ENCODE measurements at regions of chr9 and their contacts with region 1.

Region 1: GRCh38 chr9:12054235-12054634 is 639.0 kb upstream of the TYRP1 start:
- DNase-seq: no peak
- ATAC-seq: no peak
- H3K4me3 ChIP-seq: no peak overlapping the region
- H3K4me3 Mint-ChIP-seq: no peak overlapping the region
- H3K27ac ChIP-seq: no peak overlapping the region
- H3K27ac Mint-ChIP-seq: no peak overlapping the region
- H3K4me1 ChIP-seq: no peaks in the 10 kb centered on the region
- H3K4me1 Mint-ChIP-seq: no peaks in the 10 kb centered on the region
- H3K27me3 ChIP-seq: no peaks in the 10 kb centered on the region
- H3K27me3 Mint-ChIP-seq: no peaks in the 10 kb centered on the region

Region 2: GRCh38 chr9:12014488-12014887 is 39.7 kb before region 1 on chr9:
- CTCF ChIA-PET with region 1: no interaction called
- POLR2A ChIA-PET with region 1: no interaction called
- intact Hi-C with region 1: loop called in 1 of 2 experiments (anchors 5 kb)
- DNase-seq: no peak
- ATAC-seq: no peak
- H3K4me3 ChIP-seq: no peak overlapping the region
- H3K4me3 Mint-ChIP-seq: no peak overlapping the region
- H3K27ac ChIP-seq: no peak overlapping the region
- H3K27ac Mint-ChIP-seq: no peak overlapping the region
- H3K4me1 ChIP-seq: no peaks in the 10 kb centered on the region
- H3K4me1 Mint-ChIP-seq: no peaks in the 10 kb centered on the region
- H3K27me3 ChIP-seq: no peaks in the 10 kb centered on the region
- H3K27me3 Mint-ChIP-seq: no peaks in the 10 kb centered on the region